ENCODE measurements at regions of chr13 and their contacts with region 1.

Region 1: DNA sequence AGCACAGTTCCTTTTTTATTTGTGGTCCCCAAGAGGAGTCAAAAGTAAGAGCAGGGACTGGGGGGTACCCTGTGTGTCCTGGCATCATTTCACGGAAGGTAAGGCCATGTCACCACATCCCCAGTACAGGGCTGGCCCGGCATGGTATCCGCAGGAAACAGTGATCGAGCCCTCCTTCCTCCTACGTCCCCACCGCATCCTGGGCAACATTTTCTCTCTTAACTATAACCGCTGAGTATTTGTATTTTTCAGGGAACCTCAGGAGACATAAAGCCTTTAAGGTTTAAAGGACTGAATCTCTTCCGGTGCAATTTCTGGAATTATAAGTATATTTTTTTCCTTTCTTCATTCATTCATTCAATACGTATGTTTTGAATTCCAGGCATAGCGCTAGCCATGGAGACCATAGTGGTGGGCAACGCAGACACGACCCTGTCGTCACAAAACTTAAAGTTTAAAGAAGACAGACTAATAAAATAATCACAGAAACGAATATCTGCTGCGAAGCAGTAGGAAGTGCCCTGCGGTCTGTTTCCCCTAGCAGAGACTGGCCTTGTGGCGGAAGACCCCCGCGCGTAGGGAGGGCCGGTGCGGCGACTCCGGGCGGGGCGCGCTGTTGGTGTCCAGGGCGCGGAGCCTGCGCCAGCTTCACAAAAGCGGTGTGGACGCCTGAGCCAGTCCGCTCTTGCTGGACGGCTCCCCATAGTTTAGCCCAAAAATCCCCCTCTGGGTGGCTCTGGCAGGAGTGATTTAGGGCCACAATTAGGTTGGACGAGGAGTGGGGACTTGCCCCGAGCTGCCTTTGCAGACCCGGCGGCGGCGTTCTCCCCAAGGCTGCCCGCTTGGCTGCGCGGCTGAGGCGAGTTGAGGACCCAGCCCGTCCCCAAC is 13.9 kb upstream of the LATS2 start:
- DNase-seq: peak in 7 of 9 donors; percentile 21 to 37 (median 29)
- ATAC-seq: peak; percentile 75
- H3K4me3 ChIP-seq: peak overlapping the region; percentile 59
- H3K4me3 Mint-ChIP-seq: peak overlapping the region; percentile 66 to 87 (median 82)
- H3K27ac ChIP-seq: no peak overlapping the region
- H3K27ac Mint-ChIP-seq: peak overlapping the region in 6 of 9 donors; percentile 19 to 87 (median 70)
- H3K4me1 ChIP-seq: peaks cover 6 to 12% of the 10 kb centered on the region in 2 donors
- H3K4me1 Mint-ChIP-seq: peaks cover 13 to 25% (median 16%) of the 10 kb centered on the region in 7 donors
- H3K27me3 ChIP-seq: peaks cover 0 to 2% of the 10 kb centered on the region in 2 donors
- H3K27me3 Mint-ChIP-seq: peaks cover 5 to 21% (median 11%) of the 10 kb centered on the region in 5 donors

Region 2: GRCh38 chr13:21014502-21015170 is 60.6 kb before region 1 on chr13:
- CTCF ChIA-PET with region 1: no interaction called
- POLR2A ChIA-PET with region 1: no interaction called
- intact Hi-C with region 1: loop called in 1 of 2 experiments (anchors 5 kb)
- DNase-seq: no peak
- ATAC-seq: no peak
- H3K4me3 ChIP-seq: no peak overlapping the region
- H3K4me3 Mint-ChIP-seq: no peak overlapping the region
- H3K27ac ChIP-seq: no peak overlapping the region
- H3K27ac Mint-ChIP-seq: no peak overlapping the region
- H3K4me1 ChIP-seq: peaks cover 0 to 6% of the 10 kb centered on the region in 2 donors
- H3K4me1 Mint-ChIP-seq: peaks cover 0 to 36% (median 9%) of the 10 kb centered on the region in 7 donors
- H3K27me3 ChIP-seq: no peaks in the 10 kb centered on the region
- H3K27me3 Mint-ChIP-seq: no peaks in the 10 kb centered on the region